GM10248 (cell line): ENCODE measurements at regions of chr3 and their contacts with region 1.

Region 1: DNA sequence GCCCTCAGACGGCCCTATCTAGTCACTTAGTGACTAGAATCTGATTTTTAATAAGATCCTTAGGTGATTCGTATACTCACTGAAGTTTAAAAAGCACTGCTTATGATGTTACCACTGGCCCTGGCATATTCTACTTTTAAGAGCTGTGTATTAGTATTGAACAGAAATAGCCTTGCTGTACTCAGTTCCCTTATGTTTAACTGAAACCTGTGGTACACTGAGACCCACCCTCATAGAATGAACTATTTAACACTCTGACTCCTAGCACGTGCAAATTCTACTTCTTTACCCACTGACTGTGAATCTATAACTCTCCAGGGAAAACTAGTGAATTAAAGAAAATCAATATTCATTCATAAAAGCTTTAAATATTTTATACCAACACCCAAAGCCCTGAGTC is 108.9 kb downstream of the CCNL1 start:
- DNase-seq: no peak
- CTCF ChIP-seq: no peak

Region 2: GRCh38 chr3:156983559-156983958 is 67.5 kb before region 1 on chr3:
- CTCF ChIA-PET with region 1: no interaction called
- POLR2A ChIA-PET with region 1: no interaction called
- DNase-seq: no peak
- CTCF ChIP-seq: no peak

Region 3: GRCh38 chr3:157064402-157064801 is 13.3 kb after region 1 on chr3:
- CTCF ChIA-PET with region 1: interaction called, 12 read pairs
- POLR2A ChIA-PET with region 1: no interaction called
- DNase-seq: no peak
- CTCF ChIP-seq: no peak